ENCODE measurements at regions of chr12 and their contacts with region 1.

Region 1: GRCh38 chr12:69900720-69901131 is 75.7 kb downstream of the MYRFL start:
- DNase-seq: peak; percentile 92
- H3K4me3 ChIP-seq: peak overlapping the region; percentile 20
- H3K27ac ChIP-seq: peak overlapping the region; percentile 54
- H3K4me1 ChIP-seq: peaks cover 59% of the 10 kb centered on the region
- CTCF ChIP-seq: peak; percentile 97

Region 2: GRCh38 chr12:69879041-69879960 is 21.4 kb before region 1 on chr12:
- CTCF ChIA-PET with region 1: interaction called, 12 read pairs
- POLR2A ChIA-PET with region 1: interaction called, 4 read pairs
- intact Hi-C with region 1: no loop called
- DNase-seq: peak; percentile 85
- H3K4me3 ChIP-seq: peak overlapping the region; percentile 21
- H3K27ac ChIP-seq: no peak overlapping the region
- H3K4me1 ChIP-seq: peaks cover 7% of the 10 kb centered on the region
- CTCF ChIP-seq: peak; percentile 98

Region 3: GRCh38 chr12:69985656-69986055 is 84.9 kb after region 1 on chr12:
- CTCF ChIA-PET with region 1: no interaction called
- POLR2A ChIA-PET with region 1: interaction called, 3 read pairs
- intact Hi-C with region 1: loop called (anchors 5 kb)
- DNase-seq: peak; percentile 42
- H3K4me3 ChIP-seq: no peak overlapping the region
- H3K27ac ChIP-seq: no peak overlapping the region
- H3K4me1 ChIP-seq: no peaks in the 10 kb centered on the region
- CTCF ChIP-seq: peak; percentile 70

Region 4: GRCh38 chr12:70005864-70006618 is 105.3 kb after region 1 on chr12:
- CTCF ChIA-PET with region 1: no interaction called
- POLR2A ChIA-PET with region 1: no interaction called
- intact Hi-C with region 1: no loop called
- DNase-seq: no peak
- H3K4me3 ChIP-seq: no peak overlapping the region
- H3K27ac ChIP-seq: no peak overlapping the region
- H3K4me1 ChIP-seq: peaks cover 6% of the 10 kb centered on the region
- CTCF ChIP-seq: no peak

Region 5: DNA sequence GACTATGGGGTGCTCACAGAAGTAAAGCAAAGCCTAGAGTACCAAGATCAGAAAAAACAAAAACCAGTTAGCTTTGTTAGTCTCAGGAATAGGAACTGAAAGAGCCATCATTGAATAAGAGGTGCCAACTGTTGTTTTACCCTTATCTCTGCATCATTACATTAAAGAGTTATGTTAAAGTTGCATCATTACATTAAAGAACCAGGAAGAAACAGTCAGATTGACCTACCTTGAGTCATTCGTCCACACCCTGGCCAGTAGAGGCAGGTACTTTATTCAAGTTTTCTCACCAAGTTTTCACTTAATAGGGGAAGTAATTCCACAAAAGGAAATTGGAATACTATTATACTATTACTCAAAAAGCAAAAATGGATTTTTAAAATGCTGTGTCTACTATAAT is 220.8 kb after region 1 on chr12:
- CTCF ChIA-PET with region 1: no interaction called
- POLR2A ChIA-PET with region 1: no interaction called
- intact Hi-C with region 1: loop called (anchors 5 kb)
- DNase-seq: no peak
- H3K4me3 ChIP-seq: no peak overlapping the region
- H3K27ac ChIP-seq: no peak overlapping the region
- H3K4me1 ChIP-seq: peaks cover 6% of the 10 kb centered on the region
- CTCF ChIP-seq: no peak

Region 6: DNA sequence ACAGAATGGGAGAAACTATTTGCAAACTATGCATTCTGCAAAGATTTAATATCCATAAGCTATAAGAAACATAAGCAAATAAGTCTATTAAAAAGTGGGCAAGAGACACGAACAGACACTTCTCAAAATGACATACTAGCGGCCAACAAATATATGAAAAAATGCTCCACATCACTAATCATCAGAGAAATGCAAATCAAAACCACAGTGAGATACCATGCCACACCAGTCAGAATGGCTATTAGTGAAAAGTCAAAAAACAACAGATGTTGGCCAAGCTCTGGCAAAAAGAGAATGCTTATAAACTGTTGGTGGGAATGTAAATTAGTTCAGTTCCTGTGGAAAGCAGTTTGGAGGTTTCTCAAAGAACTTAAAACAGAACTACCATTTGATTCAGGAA is 586.7 kb after region 1 on chr12:
- CTCF ChIA-PET with region 1: no interaction called
- POLR2A ChIA-PET with region 1: interaction called, 4 read pairs
- intact Hi-C with region 1: loop called (anchors 1 kb)
- DNase-seq: peak; percentile 51
- H3K4me3 ChIP-seq: peak overlapping the region; percentile 9
- H3K27ac ChIP-seq: peak overlapping the region; percentile 63
- H3K4me1 ChIP-seq: peaks cover 44% of the 10 kb centered on the region
- CTCF ChIP-seq: no peak

Region 7: GRCh38 chr12:70576346-70577282 is 675.9 kb after region 1 on chr12:
- CTCF ChIA-PET with region 1: no interaction called
- POLR2A ChIA-PET with region 1: interaction called, 5 read pairs
- intact Hi-C with region 1: loop called (anchors 1 kb)
- DNase-seq: peak; percentile 71
- H3K4me3 ChIP-seq: no peak overlapping the region
- H3K27ac ChIP-seq: no peak overlapping the region
- H3K4me1 ChIP-seq: no peaks in the 10 kb centered on the region
- CTCF ChIP-seq: peak; percentile 91